Esophagus muscularis mucosa (tissue), 4 donors: ENCODE measurements at regions of chr5 and their contacts with region 1.

Region 1: GRCh38 chr5:78547731-78548615 is 100.6 kb downstream of the LHFPL2 start:
- DNase-seq: peak; percentile 95
- H3K4me3 ChIP-seq: no peak overlapping the region
- H3K27ac ChIP-seq: peak overlapping the region; percentile 65 to 77 (median 67)
- H3K4me1 ChIP-seq: peaks cover 32 to 70% (median 53%) of the 10 kb centered on the region in 4 donors
- H3K27me3 ChIP-seq: no peaks in the 10 kb centered on the region
- CTCF ChIP-seq: no peak
- EP300 ChIP-seq: no peak
- POLR2A ChIP-seq: no peak

Region 2: DNA sequence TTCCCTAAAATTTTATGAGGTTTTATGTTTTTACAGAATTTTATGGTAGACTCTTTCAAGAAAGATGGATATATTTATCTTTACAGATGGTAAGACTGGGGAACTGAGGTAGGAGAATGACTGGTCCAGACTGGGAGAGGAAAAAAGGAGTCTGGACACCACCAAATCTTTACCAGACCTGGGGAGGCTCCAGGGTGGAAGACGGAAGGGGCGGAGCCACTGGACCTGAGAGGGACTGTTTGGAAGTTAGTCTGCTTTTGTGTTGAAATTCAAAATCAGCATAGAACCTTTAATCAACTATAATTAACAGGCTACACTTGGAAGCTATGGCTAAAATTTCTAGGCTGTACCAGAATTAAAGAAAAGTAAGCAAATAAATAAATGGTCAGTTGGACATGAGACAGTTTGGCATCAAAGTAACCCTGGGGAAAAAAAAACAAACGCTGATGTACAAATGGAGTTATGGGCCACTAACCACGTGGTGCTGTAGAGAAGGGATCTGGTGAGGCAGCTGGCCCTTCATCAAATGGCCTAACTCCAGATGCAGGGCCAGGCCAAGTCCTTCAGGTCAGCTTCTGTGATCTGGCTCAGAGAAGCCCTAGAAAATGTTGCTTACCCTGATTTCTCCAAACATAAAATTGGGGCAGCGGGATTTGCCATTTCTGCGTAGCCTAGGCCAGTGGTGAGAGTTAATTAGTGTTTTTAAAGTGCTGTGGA is 282.0 kb after region 1 on chr5:
- intact Hi-C with region 1: loop called (anchors 10 kb)
- DNase-seq: no peak
- H3K4me3 ChIP-seq: no peak overlapping the region
- H3K27ac ChIP-seq: no peak overlapping the region
- H3K4me1 ChIP-seq: peaks cover 5 to 19% (median 15%) of the 10 kb centered on the region in 4 donors
- H3K27me3 ChIP-seq: no peaks in the 10 kb centered on the region
- CTCF ChIP-seq: no peak
- EP300 ChIP-seq: no peak
- POLR2A ChIP-seq: no peak